Activated CD4-positive, alpha-beta T cell treated with anti-CD3 and anti-CD28 coated beads, Interleukin-2, amount 10 ng/mL, durations not matched to agents 24 days and 14 days (primary cell): ENCODE measurements at regions of chr10 and their contacts with region 1.

Region 1: DNA sequence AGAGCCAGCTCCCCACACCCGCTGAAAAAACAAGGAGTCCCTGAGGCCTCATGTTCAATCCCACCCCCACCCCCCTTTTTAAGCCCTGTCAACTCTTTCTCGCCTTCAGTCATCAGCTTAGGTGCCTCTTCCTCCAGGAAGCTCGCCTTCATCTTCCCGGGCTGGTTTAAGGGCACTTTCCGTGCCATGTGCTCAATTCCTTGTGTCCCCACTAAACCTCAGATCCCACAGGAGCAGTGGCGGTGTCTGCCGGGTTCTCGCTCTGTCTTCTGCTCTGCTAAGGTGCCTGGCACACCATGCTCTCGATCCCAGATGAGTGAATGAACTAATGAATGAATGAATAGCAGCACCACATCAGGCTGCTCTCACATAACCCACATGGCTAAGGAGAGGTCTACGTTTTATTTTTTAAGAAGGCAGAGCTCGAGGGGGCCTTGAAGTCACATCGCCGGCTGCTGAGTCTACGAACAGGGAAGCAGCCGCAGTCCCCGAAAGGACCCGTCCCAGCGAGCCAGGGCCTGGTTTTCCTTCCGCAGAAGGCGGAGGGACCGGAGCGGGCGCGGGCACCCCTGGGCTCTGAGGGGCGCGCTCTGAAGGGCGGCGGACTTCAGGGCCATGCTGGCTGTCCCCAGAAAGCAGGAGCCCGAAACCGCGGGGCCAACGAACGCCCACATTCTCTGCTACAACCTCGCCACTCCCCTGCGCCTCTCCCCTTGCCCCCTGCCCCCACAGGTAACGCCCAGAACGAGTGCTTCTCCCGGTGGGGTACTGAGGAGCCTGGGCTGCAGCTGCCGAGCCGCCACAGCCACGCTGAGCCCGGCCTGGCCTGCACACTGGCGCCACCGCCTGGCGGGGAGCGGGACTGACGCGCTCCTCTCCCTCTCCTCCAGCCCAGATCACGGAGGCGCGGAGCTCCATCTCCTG is 73.4 kb upstream of the KCNMA1 start:
- DNase-seq: peak; percentile 93
- H3K4me3 Mint-ChIP-seq: peak overlapping the region; percentile 61
- H3K27ac Mint-ChIP-seq: no peak overlapping the region
- H3K4me1 Mint-ChIP-seq: peaks cover 5% of the 10 kb centered on the region
- H3K27me3 Mint-ChIP-seq: peaks cover 34% of the 10 kb centered on the region

Region 2: GRCh38 chr10:77173615-77174461 is 537.2 kb before region 1 on chr10:
- intact Hi-C with region 1: loop called (anchors 5 kb)
- DNase-seq: peak; percentile 87
- H3K4me3 Mint-ChIP-seq: no peak overlapping the region
- H3K27ac Mint-ChIP-seq: no peak overlapping the region
- H3K4me1 Mint-ChIP-seq: no peaks in the 10 kb centered on the region
- H3K27me3 Mint-ChIP-seq: peaks cover 4% of the 10 kb centered on the region

Region 3: GRCh38 chr10:77756319-77757232 is 45.6 kb after region 1 on chr10:
- intact Hi-C with region 1: loop called (anchors 5 kb)
- DNase-seq: no peak
- H3K4me3 Mint-ChIP-seq: no peak overlapping the region
- H3K27ac Mint-ChIP-seq: no peak overlapping the region
- H3K4me1 Mint-ChIP-seq: no peaks in the 10 kb centered on the region
- H3K27me3 Mint-ChIP-seq: peaks cover 29% of the 10 kb centered on the region